Activated T-helper 2 cell treated with anti-CD3 and anti-CD28 coated beads, Interferon-gamma antibody, Interleukin-2, Interleukin-4, amounts not matched to agents 10 μg/mL and 5 μg/mL and 100 μg/mL, durations not matched to agents 14 hours and 24 hours and 36 hours (primary cell): ENCODE measurements at regions of chr7 and their contacts with region 1.

Region 1: GRCh38 chr7:64562626-64563275 is at the start of gene ZNF680:
- DNase-seq: peak; percentile 87
- H3K4me3 Mint-ChIP-seq: peak within 1 kb of the TSS; percentile 98
- H3K27ac Mint-ChIP-seq: peak within 1 kb of the TSS; percentile 95
- H3K4me1 Mint-ChIP-seq: peaks cover 8% of the 10 kb centered on the region
- H3K27me3 Mint-ChIP-seq: peaks cover 2% of the 10 kb centered on the region
- total RNA-seq, gene ZNF680: 10.9 and 11.3 TPM in 2 replicates

Region 2: DNA sequence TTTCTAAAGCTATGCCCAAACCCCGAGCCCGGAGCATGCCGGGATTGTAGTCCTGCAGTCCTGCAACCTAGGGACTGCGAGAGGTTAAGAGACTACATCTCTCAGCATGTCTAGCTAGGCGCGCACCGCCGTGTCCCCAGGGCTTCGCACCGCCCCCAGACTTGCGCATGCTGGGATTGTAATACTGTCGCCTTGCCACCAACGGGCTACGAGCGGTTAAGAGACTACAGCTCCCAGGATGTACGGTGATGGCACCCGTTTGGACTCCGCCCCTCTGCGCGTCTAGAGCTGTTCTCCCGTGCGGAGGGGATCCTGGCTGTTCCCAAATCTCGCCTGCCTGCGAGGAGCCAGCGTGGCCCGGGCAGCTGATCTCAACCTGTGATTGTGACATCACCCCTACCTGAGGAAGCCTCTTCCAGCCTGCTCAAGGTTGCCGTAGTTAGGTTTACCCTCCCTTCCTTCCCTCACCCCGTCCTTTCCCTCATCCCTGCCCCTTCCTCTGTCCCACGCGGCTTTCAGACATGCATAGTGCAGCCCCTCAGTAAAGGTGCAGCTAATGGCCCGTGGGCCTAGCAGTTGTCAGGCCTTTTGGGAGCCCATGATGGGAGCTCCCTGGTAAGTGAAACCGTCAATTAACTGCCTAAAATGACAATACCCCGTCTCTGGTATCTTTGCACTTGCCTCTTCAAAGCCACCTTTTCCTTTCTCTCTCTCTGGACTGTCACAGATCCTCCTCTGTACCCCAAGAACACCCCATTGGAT is 255.3 kb before region 1 on chr7:
- intact Hi-C with region 1: loop called (anchors 1 kb)
- DNase-seq: peak; percentile 92
- H3K4me3 Mint-ChIP-seq: peak overlapping the region; percentile 97
- H3K27ac Mint-ChIP-seq: peak overlapping the region; percentile 91
- H3K4me1 Mint-ChIP-seq: peaks cover 12% of the 10 kb centered on the region
- H3K27me3 Mint-ChIP-seq: no peaks in the 10 kb centered on the region

Region 3: DNA sequence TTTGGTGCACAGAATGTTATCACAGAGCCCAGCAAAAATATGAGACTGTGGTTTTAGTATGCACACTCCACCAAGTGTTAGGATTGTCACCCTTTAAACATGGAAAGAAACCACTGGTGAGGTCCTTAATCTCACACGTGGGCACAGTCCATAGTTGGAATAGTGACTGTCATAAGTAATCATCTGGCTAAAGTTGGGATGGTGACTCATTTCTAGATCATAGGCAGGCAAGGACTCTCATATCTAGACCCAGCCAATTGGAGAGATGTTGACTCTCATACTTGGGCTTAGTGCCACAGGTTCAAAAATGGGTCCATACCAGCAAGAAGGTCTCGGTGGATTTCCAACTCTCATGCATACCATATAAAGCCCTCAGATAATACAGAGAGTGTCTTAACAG is 39.8 kb after region 1 on chr7:
- intact Hi-C with region 1: no loop called
- DNase-seq: no peak
- H3K4me3 Mint-ChIP-seq: no peak overlapping the region
- H3K27ac Mint-ChIP-seq: no peak overlapping the region
- H3K4me1 Mint-ChIP-seq: no peaks in the 10 kb centered on the region
- H3K27me3 Mint-ChIP-seq: no peaks in the 10 kb centered on the region

Region 4: DNA sequence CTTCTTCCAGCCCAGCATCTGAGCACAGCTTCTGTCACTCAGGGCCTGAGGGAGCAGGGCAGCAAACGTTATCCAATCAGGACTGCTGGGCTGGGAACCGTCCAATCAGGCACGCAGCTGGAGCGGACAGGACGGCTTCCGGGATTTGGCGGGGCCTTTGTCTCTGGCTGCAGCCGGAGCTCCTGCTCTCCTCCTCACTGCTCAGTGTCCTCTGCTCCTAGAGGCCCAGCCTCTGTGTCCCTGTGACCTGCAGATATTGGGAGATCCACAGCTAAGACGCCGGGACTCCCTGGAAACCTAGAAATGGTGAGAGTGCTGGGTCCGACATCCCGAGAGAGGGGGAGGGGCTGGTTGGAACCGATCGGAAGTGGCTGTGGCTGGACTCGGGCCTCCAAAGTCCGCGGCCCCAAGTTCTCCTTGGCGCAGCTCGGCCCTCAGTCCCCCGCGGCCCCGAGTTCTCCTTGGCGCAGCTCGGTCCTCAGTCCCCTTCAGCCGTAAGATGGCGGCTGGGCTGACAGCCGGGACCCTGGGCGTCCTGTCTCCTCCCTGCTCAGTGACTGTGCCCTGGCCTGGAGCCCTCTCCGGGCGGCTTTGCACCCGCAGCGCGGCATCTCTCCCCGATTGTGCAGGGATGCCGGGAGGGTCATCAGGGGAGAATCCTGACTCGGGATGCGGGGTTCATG is 103.4 kb after region 1 on chr7 and contains the start of gene ZNF107:
- intact Hi-C with region 1: loop called (anchors 2 kb)
- DNase-seq: peak; percentile 83
- H3K4me3 Mint-ChIP-seq: peak within 1 kb of the TSS; percentile 97
- H3K27ac Mint-ChIP-seq: peak within 1 kb of the TSS; percentile 92
- H3K4me1 Mint-ChIP-seq: peaks cover 11% of the 10 kb centered on the region
- H3K27me3 Mint-ChIP-seq: no peaks in the 10 kb centered on the region
- total RNA-seq, gene ZNF107: 12.8 and 13.1 TPM in 2 replicates

Region 5: DNA sequence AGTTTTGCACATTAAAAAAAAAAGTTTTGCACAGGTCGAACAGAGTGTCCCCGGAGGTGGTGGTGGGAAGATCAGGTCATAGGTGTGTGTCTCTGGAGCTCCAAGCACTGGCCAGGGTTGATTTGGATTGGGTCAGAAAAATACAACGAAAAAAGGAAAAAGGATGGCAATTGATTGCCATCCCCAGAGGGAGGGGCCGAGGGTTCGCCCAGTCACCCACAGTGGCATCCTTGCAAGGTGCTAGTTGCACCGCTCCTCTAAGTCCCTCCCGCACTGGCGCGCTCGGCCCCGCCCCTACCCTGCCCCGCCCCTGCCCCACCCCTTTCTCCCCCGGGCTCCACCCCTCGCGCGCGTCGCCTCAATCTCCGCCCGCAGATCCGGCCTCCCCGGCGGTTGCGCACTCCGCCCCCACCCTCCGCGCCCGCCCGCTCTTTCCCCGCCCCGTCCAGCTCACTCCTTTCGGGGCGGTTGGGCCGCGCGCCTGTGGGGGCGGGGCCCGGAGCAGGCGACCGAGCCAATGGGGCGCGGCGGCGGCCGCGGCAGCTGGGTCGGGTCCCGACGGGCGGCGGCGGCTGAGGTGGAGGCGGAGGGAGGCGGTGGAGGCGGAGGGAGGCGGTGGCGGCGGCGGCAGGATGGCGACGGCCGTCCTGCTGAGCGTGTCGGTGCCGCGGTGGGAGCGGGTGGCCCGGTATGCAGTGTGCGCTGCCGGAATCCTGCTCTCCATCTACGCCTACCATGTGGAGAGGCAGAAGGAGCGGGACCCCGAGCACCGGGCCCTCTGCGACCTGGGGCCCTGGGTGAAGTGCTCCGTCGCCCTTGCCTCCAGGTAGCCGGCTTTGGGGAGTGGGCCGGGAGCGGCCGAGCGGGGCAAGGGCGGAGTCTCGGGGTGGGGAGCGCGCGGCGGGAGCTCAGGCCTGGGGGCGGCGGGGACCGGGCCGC is 475.3 kb after region 1 on chr7:
- intact Hi-C with region 1: loop called (anchors 2 kb)
- DNase-seq: peak; percentile 85
- H3K4me3 Mint-ChIP-seq: peak overlapping the region; percentile 74
- H3K27ac Mint-ChIP-seq: peak overlapping the region; percentile 70
- H3K4me1 Mint-ChIP-seq: peaks cover 16% of the 10 kb centered on the region
- H3K27me3 Mint-ChIP-seq: no peaks in the 10 kb centered on the region